Prostate gland (tissue), 2 donors: ENCODE measurements at regions of chr9 and their contacts with region 1.

Region 1: GRCh38 chr9:37485389-37486219 is at the start of gene POLR1E:
- DNase-seq: peak; percentile 96
- H3K4me3 ChIP-seq: peak within 1 kb of the TSS; percentile 63
- H3K27ac ChIP-seq: peak within 1 kb of the TSS; percentile 53 to 65
- H3K4me1 ChIP-seq: no peaks in the 10 kb centered on the region
- H3K27me3 ChIP-seq: no peaks in the 10 kb centered on the region
- CTCF ChIP-seq: no peak
- POLR2A ChIP-seq: peak; percentile 67
- total RNA-seq, gene POLR1E: 20.7 to 21.0 TPM

Region 2: GRCh38 chr9:37220971-37221370 is 264.6 kb before region 1 on chr9:
- intact Hi-C with region 1: no loop called
- DNase-seq: no peak
- H3K4me3 ChIP-seq: no peak overlapping the region
- H3K27ac ChIP-seq: no peak overlapping the region
- H3K4me1 ChIP-seq: no peaks in the 10 kb centered on the region
- H3K27me3 ChIP-seq: no peaks in the 10 kb centered on the region
- CTCF ChIP-seq: no peak
- POLR2A ChIP-seq: no peak

Region 3: DNA sequence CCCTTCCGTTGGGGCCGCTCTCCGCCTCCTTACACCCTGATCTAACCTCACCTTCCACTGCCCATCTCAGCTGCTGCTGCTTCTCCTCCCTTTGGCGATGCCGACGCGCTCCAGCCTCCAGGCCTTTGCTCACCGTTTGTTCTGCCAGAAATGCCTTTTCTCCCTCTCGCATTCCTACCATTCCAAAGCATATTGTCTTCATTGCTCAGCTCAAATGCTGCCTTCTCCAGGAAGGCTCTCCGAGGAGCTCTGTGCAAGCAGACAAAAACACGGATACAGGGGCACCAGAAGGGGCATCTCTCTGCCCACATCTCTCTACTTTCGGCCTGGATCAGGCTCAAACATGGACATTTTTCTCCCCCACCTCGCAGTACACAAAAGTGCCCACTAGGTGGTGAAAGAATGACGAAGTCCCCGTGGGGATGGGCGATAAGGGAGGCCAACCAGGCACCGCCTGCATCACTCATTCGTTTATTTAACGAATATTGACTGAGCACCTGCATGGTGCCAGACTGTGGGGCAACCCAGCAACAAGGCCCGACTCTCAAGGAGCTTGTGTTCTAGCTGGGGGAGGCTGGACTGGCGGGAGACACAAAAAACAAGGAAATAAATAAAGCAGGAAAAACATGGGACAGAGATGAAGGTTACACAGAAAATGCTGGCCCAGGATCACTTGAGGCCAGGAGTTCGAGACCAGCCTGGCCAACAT is 70.4 kb before region 1 on chr9:
- intact Hi-C with region 1: loop called (anchors 5 kb)
- DNase-seq: peak; percentile 56
- H3K4me3 ChIP-seq: no peak overlapping the region
- H3K27ac ChIP-seq: no peak overlapping the region
- H3K4me1 ChIP-seq: no peaks in the 10 kb centered on the region
- H3K27me3 ChIP-seq: no peaks in the 10 kb centered on the region
- CTCF ChIP-seq: peak; percentile 59 to 81 (median 71)
- POLR2A ChIP-seq: no peak

Region 4: DNA sequence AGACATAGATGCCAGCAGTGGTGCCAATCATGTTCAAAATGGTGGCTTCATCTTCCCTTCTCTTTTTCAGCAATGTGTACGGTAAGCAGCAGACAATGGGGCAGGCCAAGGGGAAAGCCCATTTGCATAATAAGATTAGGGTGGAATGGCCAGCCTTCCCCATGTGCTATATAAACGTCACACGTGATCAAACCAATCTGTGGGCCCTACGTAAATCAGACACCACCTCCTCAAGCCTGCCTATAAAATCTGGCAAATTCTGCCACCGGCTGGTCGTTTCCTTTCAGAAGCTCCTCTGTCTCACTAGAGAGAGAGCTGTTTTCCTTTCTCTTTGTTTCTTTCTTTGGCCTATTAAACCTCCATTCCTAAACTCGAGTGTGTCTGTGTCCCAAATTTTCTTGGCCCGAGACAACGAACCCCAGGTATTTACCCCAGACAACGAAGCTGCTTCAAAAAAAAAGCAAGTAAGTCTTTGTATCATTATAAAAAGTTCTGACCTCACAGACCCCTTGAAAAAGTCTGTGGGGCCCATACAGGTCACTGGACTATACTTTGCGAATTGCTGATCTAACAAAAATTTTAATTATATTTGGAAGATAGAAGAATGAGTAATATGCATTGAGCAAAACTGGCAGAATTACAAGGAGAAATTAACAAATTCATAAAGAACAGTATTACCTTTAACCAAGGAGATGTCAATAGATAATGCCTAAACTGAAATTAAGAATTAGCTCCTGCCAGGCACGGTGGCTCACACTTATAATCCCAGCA is 35.6 kb before region 1 on chr9:
- intact Hi-C with region 1: no loop called
- DNase-seq: no peak
- H3K4me3 ChIP-seq: no peak overlapping the region
- H3K27ac ChIP-seq: no peak overlapping the region
- H3K4me1 ChIP-seq: peaks cover 4% of the 10 kb centered on the region
- H3K27me3 ChIP-seq: no peaks in the 10 kb centered on the region
- CTCF ChIP-seq: no peak
- POLR2A ChIP-seq: no peak

Region 5: DNA sequence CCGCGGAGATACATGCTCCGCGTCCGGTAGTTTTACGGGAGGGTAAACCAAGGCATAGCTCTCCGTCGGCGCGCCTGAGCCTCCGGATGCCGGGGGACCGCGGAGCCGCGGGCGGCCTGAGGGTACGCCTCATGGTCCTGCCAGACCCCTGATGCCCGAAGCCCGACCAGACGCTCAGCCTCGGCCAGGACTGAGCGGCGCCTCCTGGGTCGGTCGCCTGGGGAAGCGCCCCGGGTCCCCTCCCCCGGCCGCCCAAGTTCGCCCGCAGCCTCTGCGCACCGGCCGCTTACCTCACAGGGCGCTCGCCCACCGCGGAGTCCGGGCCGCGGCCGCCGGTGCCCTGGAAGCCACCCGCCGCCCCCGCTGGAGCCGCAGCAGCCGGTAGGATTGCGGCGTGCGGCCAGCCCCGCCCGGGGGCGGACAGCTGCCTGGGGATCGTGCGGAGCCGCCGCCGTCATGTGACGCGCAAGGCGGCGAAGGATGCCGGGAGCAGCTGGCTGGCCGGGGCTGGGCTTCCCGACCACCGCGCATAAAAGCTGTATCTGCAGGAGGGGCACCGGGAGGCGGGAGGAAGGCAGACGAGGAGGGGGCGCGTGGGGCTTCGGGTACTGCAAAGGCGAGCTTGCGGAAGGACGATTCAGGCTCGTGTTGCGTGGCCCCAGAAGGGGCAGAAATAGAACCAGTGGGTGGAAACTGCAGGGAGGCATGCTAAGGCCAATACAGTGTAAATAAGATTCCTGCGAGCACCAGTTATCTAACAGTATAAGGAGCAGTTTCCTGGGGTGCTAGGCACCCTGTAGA is 90.5 kb after region 1 on chr9 and contains the start of gene FBXO10:
- intact Hi-C with region 1: loop called (anchors 5 kb)
- DNase-seq: peak; percentile 49
- H3K4me3 ChIP-seq: peak within 1 kb of the TSS; percentile 72 to 85
- H3K27ac ChIP-seq: peak within 1 kb of the TSS; percentile 73 to 74
- H3K4me1 ChIP-seq: no peaks in the 10 kb centered on the region
- H3K27me3 ChIP-seq: no peaks in the 10 kb centered on the region
- CTCF ChIP-seq: peak in 2 of 4 experiments; percentile 6
- POLR2A ChIP-seq: peak; percentile 27
- total RNA-seq, gene FBXO10: 8.5 to 17.6 TPM

Region 6: DNA sequence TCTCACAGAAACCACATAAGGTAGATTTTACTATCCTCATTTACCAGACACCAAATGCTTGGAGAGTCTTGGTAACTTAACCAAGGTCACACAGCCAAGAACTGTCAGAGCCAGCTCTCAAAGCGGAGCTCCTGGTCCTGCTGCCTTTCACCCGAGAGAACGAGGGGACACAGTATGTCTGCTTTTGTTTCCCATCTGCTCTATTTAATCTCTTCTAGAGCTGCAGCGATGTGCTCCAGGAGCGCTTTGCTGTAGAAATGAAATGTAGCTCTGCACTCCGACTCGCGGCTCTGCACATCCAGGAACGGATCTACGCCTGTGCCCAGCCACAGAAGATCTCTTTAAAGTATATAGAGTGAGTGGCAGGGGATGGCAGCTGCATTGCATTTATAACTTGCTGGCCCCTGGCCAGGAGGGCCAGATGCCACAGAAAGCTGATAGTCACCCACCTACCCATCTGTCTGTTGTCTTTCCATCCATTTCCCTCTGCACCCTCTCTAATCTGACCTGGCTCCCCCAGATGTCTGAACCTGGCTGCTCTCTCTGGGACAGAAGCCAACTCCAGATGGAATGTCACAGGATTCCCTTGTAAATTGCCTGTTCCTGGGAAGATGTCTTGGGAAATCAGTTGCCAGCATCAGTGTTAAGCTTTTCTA is 246.6 kb after region 1 on chr9:
- intact Hi-C with region 1: no loop called
- DNase-seq: no peak
- H3K4me3 ChIP-seq: no peak overlapping the region
- H3K27ac ChIP-seq: no peak overlapping the region
- H3K4me1 ChIP-seq: no peaks in the 10 kb centered on the region
- H3K27me3 ChIP-seq: no peaks in the 10 kb centered on the region
- CTCF ChIP-seq: no peak
- POLR2A ChIP-seq: no peak

Region 7: DNA sequence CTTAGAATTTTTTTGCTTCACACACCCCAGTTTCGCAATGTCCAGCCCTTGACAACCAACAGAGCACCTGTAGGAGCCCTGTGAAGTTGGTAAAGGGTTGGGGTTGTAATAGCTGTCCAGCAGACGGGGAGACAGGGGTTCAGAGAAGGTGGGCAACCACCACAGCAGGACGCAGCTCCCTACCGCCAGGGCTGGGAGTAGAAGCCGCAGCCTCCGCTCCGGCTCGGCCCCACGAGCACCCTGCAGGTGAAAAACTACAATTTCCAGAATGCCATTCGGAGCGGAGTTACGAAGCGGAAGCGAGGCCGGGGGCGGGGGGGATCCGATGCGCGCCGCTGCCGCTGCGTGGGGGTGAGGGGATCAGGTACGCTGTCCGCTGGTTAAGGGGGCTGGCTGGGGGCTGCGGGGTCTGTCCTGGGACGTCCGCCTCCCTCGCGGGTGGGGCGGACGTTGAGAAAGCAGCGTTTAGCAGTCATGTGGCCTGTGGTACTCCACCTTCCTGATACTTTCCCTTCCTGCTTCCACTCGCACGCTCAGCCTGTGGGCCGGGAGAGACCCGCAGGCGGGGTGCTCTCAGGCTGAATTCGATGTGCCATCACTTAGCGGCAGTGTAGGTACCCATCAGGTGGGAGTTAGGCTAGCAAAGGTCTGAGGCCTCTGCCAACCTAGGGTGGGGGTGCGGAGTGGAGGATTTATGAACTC is 268.0 kb after region 1 on chr9 and contains the start of gene TRMT10B:
- intact Hi-C with region 1: loop called (anchors 5 kb)
- DNase-seq: peak; percentile 40
- H3K4me3 ChIP-seq: peak within 1 kb of the TSS; percentile 75 to 90
- H3K27ac ChIP-seq: peak within 1 kb of the TSS; percentile 81 to 90
- H3K4me1 ChIP-seq: no peaks in the 10 kb centered on the region
- H3K27me3 ChIP-seq: no peaks in the 10 kb centered on the region
- CTCF ChIP-seq: peak in 1 of 4 experiments; percentile 27
- POLR2A ChIP-seq: no peak
- total RNA-seq, gene TRMT10B: 7.8 to 19.6 TPM

Region 8: DNA sequence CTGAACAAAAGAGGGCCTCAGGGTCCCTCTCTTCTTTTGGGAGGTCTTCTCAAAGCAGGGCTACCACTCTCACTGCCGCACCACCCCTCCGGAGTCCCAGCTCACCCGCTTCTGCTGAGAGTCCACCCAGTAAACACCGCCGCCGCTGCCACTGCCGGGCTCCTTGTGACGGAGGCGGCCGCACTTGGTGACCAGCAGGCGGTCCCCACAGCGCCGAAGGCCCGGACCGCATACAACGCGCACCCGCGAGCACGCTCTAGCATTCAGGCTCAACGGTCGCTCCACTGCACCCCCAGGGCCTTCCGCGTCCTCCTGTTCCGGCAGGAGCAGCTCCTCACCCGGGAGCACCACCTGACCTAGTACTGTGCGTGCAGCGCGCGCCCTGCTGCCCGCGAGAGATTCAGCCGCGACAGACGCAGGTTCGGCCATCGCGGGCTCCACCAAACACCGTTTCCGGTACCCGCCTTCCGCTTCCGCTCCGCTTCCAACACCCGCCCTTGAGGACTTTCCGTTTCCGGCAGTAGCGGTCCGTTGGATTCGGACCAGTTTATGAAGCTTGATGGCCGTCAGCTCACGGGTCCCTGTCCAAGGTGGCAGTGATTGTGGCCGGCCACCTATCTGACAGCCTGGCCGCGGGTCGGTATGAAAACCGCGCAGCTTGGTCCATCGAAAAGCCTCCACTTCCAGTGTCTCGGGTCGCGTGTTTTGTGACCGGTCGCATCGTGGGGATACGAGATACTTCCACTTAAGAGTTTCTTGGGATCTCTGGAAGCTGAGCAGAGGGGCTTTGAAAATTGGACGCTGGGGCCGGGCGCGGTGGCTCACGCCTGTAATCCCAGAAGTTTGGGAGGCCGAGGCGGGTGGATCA is 299.2 kb after region 1 on chr9 and contains the start of gene EXOSC3:
- intact Hi-C with region 1: loop called (anchors 10 kb)
- DNase-seq: peak; percentile 85
- H3K4me3 ChIP-seq: peak within 1 kb of the TSS; percentile 55 to 85
- H3K27ac ChIP-seq: peak within 1 kb of the TSS; percentile 74 to 75
- H3K4me1 ChIP-seq: no peaks in the 10 kb centered on the region
- H3K27me3 ChIP-seq: no peaks in the 10 kb centered on the region
- CTCF ChIP-seq: peak in 2 of 4 experiments; percentile 2 to 33
- POLR2A ChIP-seq: peak; percentile 48
- total RNA-seq, gene EXOSC3: 48.5 to 54.5 TPM

Region 9: DNA sequence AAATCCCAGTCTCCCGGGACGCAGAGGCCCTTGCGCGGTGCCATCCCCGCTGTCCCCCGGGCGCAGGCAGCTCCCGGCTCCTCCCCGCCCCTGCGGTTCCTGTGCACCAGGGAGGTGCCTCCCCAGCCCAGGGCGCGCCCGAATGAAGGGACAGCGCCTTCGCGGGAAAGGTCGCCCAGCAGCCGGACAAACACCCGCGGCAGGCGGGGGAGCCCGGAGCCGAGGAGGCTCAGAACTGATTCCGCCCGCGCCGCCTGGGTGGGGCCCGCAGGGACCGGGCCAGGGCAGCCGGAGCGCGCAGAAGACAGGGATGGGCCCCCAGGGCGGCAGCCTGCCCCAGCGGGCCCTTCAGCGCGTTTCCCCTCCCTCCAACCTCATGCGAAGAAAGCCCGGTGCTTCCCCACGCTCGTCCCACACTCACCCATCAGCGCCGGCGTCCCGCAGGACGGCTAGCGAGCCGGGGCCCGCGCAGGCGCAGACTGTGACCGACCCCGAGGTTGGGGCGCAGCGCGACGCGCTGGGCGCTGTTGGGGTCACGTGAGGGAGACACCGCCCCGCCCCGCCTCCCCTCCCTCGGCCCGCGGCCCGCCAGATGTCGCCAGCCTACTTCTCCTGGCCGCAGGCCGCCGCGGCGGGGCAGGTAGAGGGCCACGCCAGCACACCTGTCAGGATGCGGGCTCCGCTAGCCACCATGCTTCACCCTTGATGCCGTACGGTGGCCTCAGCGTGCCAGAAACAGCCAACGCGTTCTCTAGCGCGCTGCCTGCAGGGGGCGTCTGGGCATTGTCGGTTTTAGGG is 418.2 kb after region 1 on chr9 and contains the start of gene SLC25A51:
- intact Hi-C with region 1: loop called (anchors 10 kb)
- DNase-seq: peak; percentile 90
- H3K4me3 ChIP-seq: peak within 1 kb of the TSS; percentile 75 to 90
- H3K27ac ChIP-seq: peak within 1 kb of the TSS; percentile 83 to 85
- H3K4me1 ChIP-seq: peaks cover 6% of the 10 kb centered on the region
- H3K27me3 ChIP-seq: no peaks in the 10 kb centered on the region
- CTCF ChIP-seq: peak; percentile 83 to 97 (median 94)
- POLR2A ChIP-seq: peak; percentile 62
- total RNA-seq, gene SLC25A51: 20.2 to 21.6 TPM

Region 10: DNA sequence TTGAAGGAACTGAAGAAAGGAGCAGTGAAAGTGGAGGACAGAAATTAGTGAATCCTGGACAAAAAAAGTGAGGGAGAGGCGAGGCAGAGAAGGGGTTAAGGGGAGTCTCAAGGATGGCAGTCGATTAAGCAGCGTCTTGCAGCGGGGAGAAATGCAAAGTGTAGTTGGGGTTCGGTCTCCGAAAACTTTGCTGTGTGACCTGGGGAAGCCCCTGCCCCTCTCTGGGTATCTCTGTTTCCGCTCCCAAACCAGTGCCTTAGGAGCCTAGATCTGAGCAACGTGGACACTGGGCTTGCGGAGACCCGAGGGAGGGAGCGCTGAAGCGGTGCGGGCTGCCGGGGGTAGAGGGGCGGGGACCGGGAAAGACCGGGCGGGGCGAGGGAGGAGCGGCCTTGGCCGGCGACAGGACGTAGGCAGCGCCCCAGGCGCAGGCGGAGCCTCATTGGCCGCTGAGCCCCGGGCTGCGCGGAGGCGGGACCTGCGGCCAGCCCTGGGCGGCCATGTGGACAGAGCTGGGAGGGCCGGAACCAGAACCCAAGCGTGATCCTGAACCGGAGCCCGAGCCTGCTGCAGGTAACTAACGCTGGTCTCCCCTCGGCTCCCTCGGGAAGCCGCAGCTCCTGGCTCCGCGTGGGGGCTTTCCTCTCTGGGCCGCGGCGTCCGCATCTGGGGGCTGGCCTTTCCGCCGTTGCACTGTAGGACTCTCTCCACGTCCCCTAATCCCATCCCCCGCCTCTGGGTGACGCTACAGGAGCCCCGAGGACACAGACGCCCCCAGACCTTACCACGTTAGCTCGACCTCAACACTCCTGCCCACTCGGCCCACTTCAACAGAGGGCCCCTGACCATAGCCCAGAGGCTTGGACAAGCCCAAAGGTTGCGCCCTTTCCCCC is 906.9 kb after region 1 on chr9 and contains the start of gene ALDH1B1:
- intact Hi-C with region 1: loop called (anchors 10 kb)
- DNase-seq: peak; percentile 79
- H3K4me3 ChIP-seq: peak within 1 kb of the TSS; percentile 65 to 67
- H3K27ac ChIP-seq: peak within 1 kb of the TSS; percentile 64 to 77
- H3K4me1 ChIP-seq: peaks cover 5% of the 10 kb centered on the region
- H3K27me3 ChIP-seq: no peaks in the 10 kb centered on the region
- CTCF ChIP-seq: no peak
- POLR2A ChIP-seq: peak; percentile 24
- total RNA-seq, gene ALDH1B1: 42.5 to 88.8 TPM